GM12878 (cell line): ENCODE measurements at regions of chr12 and their contacts with region 1.

Region 1: GRCh38 chr12:125470838-125471783 is 405.9 kb downstream of the AACS start:
- DNase-seq: peak; percentile 35
- ATAC-seq: peak; percentile 89
- H3K4me3 ChIP-seq: no peak overlapping the region
- H3K27ac ChIP-seq: no peak overlapping the region
- H3K4me1 ChIP-seq: peaks cover 4% of the 10 kb centered on the region; the same call in 1 of the 2 replicates
- H3K27me3 ChIP-seq: no peaks in the 10 kb centered on the region
- CTCF ChIP-seq: no peak
- EP300 ChIP-seq: no peak
- POLR2A ChIP-seq: no peak
- RAD21 ChIP-seq: no peak

Region 2: GRCh38 chr12:125434936-125435443 is 36.1 kb before region 1 on chr12:
- CTCF ChIA-PET with region 1: interaction called, 5 read pairs
- POLR2A ChIA-PET with region 1: interaction called, 3 read pairs
- RAD21 ChIA-PET with region 1: interaction called, 27 read pairs
- SMC1A ChIA-PET with region 1: interaction called, 13 read pairs
- in situ Hi-C with region 1: no loop called
- intact Hi-C with region 1: no loop called
- DNase-seq: peak; percentile 82
- ATAC-seq: peak; percentile 92
- H3K4me3 ChIP-seq: no peak overlapping the region
- H3K27ac ChIP-seq: peak overlapping the region; percentile 17; the same call in 1 of the 2 replicates
- H3K4me1 ChIP-seq: peaks cover 11% of the 10 kb centered on the region
- H3K27me3 ChIP-seq: no peaks in the 10 kb centered on the region
- CTCF ChIP-seq: no peak
- EP300 ChIP-seq: peak; percentile 73 to 90; a peak in 3 of 4 replicates
- POLR2A ChIP-seq: no peak
- RAD21 ChIP-seq: no peak

Region 3: DNA sequence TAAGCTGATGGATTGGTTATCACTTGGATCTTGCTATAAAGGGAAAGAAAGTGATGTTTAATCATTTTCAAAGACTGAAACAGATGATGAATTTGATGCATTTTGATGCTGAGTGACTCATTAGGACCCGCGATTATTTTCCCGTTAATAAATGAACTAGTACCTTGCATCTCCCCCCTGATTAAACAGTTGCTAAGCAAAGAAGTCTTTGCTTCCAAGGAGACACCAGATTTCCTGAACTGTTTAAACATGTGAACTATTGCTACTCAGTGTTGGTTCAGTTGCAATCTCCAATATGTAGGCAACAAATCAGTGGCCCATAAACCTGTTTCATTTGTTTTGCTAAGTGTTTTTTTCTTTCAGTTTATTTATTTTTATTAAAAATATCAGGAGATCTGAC is 30.7 kb before region 1 on chr12:
- CTCF ChIA-PET with region 1: interaction called, 6 read pairs
- POLR2A ChIA-PET with region 1: interaction called, 3 read pairs
- RAD21 ChIA-PET with region 1: interaction called, 27 read pairs
- SMC1A ChIA-PET with region 1: interaction called, 13 read pairs
- in situ Hi-C with region 1: no loop called
- intact Hi-C with region 1: no loop called
- DNase-seq: no peak
- ATAC-seq: no peak
- H3K4me3 ChIP-seq: no peak overlapping the region
- H3K27ac ChIP-seq: no peak overlapping the region
- H3K4me1 ChIP-seq: peaks cover 4% of the 10 kb centered on the region
- H3K27me3 ChIP-seq: no peaks in the 10 kb centered on the region
- CTCF ChIP-seq: no peak
- EP300 ChIP-seq: no peak
- POLR2A ChIP-seq: no peak
- RAD21 ChIP-seq: no peak